Spleen (tissue), 13 donors: ENCODE measurements at regions of chr2 and their contacts with region 1.

Region 1: DNA sequence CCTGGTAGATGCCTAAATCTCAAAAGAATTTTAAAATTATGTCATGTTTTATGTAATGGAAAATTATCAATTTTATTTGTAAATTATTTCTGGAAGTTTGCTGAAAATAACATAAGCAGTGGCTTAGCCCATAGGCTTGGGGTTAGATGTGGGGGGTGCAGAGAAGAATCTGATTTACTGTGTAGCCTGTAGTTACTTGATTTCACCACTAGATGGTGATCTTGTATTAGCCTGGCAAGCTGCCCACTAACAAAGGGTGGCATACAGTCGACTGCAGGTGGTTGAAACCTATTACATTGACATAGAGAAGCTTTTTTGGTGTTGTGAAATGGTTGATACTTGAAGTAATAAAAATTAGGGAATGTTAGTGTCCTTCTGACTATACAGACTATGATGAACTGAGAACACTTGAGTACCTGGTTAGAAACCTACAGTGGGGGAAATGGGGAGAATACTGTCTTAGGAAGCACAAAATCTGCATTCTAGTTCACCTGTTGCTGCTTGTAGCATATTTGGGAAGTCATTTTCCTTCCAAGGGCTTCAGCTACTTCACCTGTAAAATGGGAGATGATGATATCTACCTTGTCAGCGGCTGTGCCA is 191.0 kb upstream of the LHCGR start:
- DNase-seq: no peak
- H3K4me3 ChIP-seq: no peak overlapping the region
- H3K27ac ChIP-seq: no peak overlapping the region
- H3K4me1 ChIP-seq: no peaks in the 10 kb centered on the region
- H3K27me3 ChIP-seq: no peaks in the 10 kb centered on the region
- CTCF ChIP-seq: peak; percentile 65 to 89 (median 81)
- POLR2A ChIP-seq: no peak

Region 2: GRCh38 chr2:48888066-48888465 is 58.5 kb before region 1 on chr2:
- intact Hi-C with region 1: no loop called
- DNase-seq: no peak
- H3K4me3 ChIP-seq: no peak overlapping the region
- H3K27ac ChIP-seq: no peak overlapping the region
- H3K4me1 ChIP-seq: no peaks in the 10 kb centered on the region
- H3K27me3 ChIP-seq: no peaks in the 10 kb centered on the region
- CTCF ChIP-seq: no peak
- POLR2A ChIP-seq: no peak

Region 3: GRCh38 chr2:50401772-50402653 is 1455.5 kb after region 1 on chr2:
- intact Hi-C with region 1: loop called (anchors 10 kb)
- DNase-seq: no peak
- H3K4me3 ChIP-seq: no peak overlapping the region
- H3K27ac ChIP-seq: no peak overlapping the region
- H3K4me1 ChIP-seq: peaks cover 0 to 7% (median 0%) of the 10 kb centered on the region in 6 donors
- H3K27me3 ChIP-seq: peaks cover 0 to under 1% (median 0%) of the 10 kb centered on the region in 7 donors
- CTCF ChIP-seq: peak in 10 of 11 experiments; percentile 29 to 68 (median 56)
- POLR2A ChIP-seq: no peak

Region 4: GRCh38 chr2:50492477-50492851 is 1545.9 kb after region 1 on chr2:
- intact Hi-C with region 1: loop called (anchors 10 kb)
- DNase-seq: no peak
- H3K4me3 ChIP-seq: peak overlapping the region in 3 of 8 donors; percentile 7 to 48 (median 10)
- H3K27ac ChIP-seq: no peak overlapping the region
- H3K4me1 ChIP-seq: peaks cover 0 to 18% (median 10%) of the 10 kb centered on the region in 6 donors
- H3K27me3 ChIP-seq: peaks cover 0 to 6% (median 0%) of the 10 kb centered on the region in 7 donors
- CTCF ChIP-seq: peak in 10 of 11 experiments; percentile 20 to 67 (median 58)
- POLR2A ChIP-seq: no peak